ENCODE measurements at regions of chr9 and their contacts with region 1.

Region 1: DNA sequence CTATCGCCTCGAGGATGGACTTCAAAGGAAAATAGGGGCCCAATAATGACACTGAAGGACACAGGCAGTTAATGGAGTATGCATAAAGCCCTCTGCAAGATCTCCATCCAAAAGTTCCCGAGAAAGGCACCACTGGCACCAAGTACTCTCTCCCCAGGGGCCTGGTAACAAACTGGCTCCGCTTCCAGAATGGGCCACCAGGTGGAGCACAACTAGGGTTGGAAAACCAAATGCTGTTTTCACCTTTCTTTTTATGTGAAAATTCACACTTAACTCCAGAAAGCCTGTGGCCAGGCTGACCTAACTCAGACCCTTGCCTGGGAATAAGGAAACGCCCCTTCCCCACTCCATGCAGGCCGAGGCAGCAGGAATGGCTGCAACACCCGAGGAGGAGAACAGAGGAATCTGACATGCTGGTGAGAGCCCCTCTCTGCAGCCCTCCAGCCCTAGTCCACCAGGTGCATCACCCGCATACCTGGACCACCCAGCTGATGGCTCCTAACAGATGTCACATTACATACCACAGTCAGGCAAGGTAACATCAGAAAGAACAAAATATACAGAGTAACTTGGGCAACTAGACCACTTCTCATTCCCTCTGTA is 42.8 kb downstream of the CAMSAP1 start:
- DNase-seq: peak; percentile 58
- H3K4me3 ChIP-seq: no peak overlapping the region
- H3K27ac ChIP-seq: no peak overlapping the region
- H3K4me1 ChIP-seq: no peaks in the 10 kb centered on the region
- H3K27me3 ChIP-seq: no peaks in the 10 kb centered on the region
- CTCF ChIP-seq: peak; percentile 81

Region 2: DNA sequence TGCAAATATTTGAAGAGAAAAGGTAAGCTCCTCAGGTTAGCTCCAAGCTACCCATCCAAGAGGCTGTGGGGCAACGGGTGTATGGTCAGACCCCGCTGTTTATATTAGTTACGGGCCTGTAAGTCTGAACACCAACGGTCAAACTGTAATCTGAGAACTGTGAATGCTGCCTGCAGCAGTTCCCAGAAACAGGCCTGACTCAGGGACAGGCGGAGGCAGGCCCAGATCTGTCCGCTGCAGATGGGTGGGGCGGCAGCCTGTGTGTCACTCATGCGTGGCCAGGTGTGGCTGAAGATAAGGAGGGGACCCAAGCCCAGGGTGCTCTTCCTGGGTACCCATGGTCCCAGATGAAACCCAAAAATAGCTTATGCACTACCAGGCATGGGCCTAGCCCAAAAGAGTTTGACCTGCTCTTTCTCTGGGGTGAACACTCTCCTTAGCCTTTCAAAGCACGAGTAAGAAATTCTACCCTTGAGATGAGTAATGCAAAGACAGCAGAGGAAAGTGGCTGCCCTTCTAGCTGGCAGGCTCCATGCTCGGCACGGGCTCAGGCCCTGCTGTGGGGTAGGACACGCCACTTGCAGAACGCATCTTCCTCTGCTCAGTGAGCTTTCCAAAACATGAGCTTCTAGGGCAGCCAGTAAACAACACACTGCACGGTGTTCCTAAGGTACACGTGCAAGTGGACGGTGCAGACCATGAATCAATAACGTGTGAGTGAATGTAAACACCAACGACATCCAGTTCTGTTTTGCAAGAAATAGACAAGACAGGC is 87.5 kb after region 1 on chr9:
- intact Hi-C with region 1: loop called (anchors 10 kb)
- DNase-seq: no peak
- H3K4me3 ChIP-seq: no peak overlapping the region
- H3K27ac ChIP-seq: no peak overlapping the region
- H3K4me1 ChIP-seq: no peaks in the 10 kb centered on the region
- H3K27me3 ChIP-seq: no peaks in the 10 kb centered on the region
- CTCF ChIP-seq: no peak

Region 3: DNA sequence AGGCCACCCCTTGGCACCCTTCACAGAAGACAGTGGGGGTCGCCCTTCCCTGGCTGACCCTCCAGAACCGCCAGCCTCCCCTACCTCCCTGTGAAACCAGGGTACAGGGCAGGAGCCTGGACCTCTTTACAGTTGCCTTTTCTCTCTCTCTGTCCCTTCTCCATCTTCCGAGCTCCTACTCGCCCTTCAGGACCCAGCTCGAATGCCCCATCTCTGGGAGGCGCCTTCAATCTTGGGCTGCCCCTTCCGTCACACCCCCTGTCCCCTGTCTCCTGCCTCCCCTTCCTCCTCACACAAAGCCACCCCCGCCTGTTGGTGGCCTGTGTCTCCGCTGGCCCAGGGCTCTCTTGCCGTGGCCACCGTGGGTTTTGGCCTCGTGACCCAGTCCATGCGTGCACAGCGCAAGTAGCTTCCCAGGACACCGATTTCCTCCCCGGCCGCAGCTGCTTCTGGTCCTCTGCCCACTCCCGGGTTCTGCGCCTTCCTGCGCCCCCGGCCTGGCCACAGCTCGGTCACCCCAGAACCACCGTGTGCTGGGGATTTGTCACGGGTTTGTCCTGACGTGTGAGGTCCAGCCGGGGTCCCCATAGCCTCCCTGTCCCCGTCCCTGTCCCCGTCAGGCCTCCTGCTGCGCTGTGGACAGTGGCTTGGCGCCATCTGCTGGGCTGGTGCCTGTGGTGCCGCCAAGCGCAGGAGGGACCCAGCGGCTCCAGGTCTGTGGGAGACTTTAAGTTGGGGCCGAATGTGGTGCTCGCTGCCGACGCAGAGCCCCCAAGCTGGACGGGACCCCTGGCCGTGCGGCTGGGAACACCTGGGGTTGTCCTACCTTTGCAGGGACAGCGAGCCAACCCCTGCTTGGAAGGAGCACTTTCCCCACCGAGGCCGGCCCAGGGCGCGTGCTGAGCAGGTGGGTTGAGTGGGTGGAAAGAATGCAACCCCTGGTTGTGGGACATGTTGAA is 258.2 kb after region 1 on chr9:
- intact Hi-C with region 1: loop called (anchors 2 kb)
- DNase-seq: peak; percentile 71
- H3K4me3 ChIP-seq: no peak overlapping the region
- H3K27ac ChIP-seq: no peak overlapping the region
- H3K4me1 ChIP-seq: peaks cover 12% of the 10 kb centered on the region
- H3K27me3 ChIP-seq: peaks cover 3% of the 10 kb centered on the region
- CTCF ChIP-seq: peak; percentile 92